Dorsolateral prefrontal cortex (tissue), 120 donors: ENCODE measurements at regions of chr19 and their contacts with region 1.

Region 1: GRCh38 chr19:45730389-45731288 is at the start of gene FBXO46:
- DNase-seq: peak; percentile 93 to 99 (median 98)
- H3K4me3 ChIP-seq: peak within 1 kb of the TSS; percentile 58 to 93 (median 79)
- H3K27ac ChIP-seq: peak within 1 kb of the TSS in 55 of 59 donors; percentile 33 to 90 (median 79)
- H3K27me3 ChIP-seq: no peaks in the 10 kb centered on the region
- CTCF ChIP-seq: peak in 24 of 56 donors; percentile 3 to 61 (median 28)
- total RNA-seq, gene FBXO46: 9.1 to 29.5 (median 17.4) TPM

Region 2: DNA sequence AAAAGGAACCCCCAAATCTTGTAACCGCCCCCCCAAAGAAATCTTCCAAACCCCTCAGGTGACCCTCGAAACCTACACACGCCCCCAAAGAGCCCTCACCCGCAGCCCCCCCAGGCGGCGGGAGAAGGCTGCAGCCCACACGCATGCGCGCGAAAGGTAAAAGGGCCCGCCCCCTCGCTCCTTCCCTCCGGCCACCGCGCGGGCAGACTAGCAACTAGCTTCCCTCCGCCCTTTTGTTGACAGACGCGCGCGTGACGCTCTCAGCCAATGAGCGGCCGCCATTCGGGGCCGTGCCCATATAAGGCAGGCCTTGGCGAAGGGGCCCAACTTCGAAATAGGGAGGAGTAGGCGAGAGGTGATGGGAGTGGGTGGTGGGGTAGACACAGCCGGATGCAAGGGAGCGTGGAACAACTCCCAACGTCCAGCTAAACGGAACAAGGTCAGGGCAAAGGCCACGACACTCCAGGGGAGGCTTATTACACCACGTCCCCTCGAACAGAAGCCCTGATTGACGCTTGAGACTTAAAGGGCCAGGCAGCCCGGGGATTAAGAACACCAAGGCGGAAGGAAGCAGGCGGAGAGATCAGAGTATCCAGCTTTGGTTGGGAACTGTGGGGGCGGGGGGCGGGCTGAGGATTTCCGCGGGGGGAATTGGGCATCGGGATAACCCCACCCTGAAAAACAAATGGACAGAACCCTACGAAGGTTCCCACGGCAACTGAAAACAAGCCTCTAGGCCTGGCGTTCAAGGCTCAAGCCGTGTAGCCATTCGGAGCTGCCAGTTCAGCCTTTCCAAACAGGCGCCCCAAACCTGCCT is 13.3 kb before region 1 on chr19:
- intact Hi-C with region 1: loop called (anchors 2 kb)
- DNase-seq: peak; percentile 98 to 100 (median 99)
- H3K4me3 ChIP-seq: peak overlapping the region; percentile 44 to 82 (median 70)
- H3K27ac ChIP-seq: peak overlapping the region; percentile 72 to 98 (median 93)
- H3K27me3 ChIP-seq: no peaks in the 10 kb centered on the region
- CTCF ChIP-seq: peak in 36 of 56 donors; percentile 7 to 49 (median 30)

Region 3: DNA sequence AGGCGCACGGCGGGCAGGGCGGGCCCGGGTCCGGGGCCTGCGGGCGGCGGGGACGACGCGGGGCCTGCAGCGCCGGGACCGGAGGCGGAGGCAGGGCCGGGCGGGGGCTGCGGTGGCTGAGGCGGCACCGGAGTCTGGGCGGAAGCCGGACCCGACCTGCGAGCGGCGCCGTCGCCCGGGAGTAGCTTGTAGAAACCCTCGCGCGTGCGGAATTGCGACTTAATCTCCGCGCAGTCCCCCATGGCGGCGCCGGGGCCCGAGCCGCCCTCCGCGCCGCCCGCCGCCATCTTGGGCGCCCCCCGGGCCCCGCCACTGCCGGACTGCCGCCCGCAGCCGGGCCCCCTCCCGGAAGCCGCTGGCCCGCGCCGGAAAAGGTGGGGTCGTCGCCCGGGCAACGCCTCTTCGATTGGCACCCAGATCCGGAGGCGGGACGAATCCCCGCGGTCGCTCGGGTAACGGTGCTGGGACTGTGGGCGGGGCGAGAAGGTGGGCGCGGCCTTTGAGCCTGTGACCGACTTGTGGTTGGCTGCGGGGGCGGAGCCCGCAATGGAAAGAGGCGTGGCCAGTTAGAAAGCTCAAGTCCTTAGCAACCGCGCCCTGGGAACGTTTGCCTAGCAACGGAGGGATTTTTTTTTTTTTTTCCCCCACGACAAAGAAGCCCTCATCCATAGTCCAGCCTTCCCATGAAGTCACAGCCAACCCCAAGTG is 62.0 kb after region 1 on chr19 and contains the start of gene DMWD:
- intact Hi-C with region 1: no loop called
- DNase-seq: peak; percentile 99 to 100 (median 100)
- H3K4me3 ChIP-seq: peak within 1 kb of the TSS; percentile 55 to 87 (median 72)
- H3K27ac ChIP-seq: peak within 1 kb of the TSS in 44 of 59 donors; percentile 4 to 86 (median 66)
- H3K27me3 ChIP-seq: no peaks in the 10 kb centered on the region
- CTCF ChIP-seq: peak in 9 of 56 donors; percentile 7 to 46 (median 22)
- total RNA-seq, gene DMWD: 58.7 to 138 (median 86.8) TPM